CD4-positive, alpha-beta T cell (primary cell): ENCODE measurements at regions of chr6 and their contacts with region 1.

Region 1: GRCh38 chr6:73329201-73329600 is 24.9 kb downstream of the DPPA5 start:
- DNase-seq: no peak
- ATAC-seq: no peak
- H3K4me3 ChIP-seq: no peak overlapping the region
- H3K4me3 Mint-ChIP-seq: no peak overlapping the region
- H3K27ac ChIP-seq: no peak overlapping the region
- H3K27ac Mint-ChIP-seq: no peak overlapping the region
- H3K4me1 ChIP-seq: no peaks in the 10 kb centered on the region
- H3K4me1 Mint-ChIP-seq: no peaks in the 10 kb centered on the region
- H3K27me3 ChIP-seq: no peaks in the 10 kb centered on the region
- H3K27me3 Mint-ChIP-seq: peaks cover 33% of the 10 kb centered on the region
- CTCF ChIP-seq: no peak

Region 2: DNA sequence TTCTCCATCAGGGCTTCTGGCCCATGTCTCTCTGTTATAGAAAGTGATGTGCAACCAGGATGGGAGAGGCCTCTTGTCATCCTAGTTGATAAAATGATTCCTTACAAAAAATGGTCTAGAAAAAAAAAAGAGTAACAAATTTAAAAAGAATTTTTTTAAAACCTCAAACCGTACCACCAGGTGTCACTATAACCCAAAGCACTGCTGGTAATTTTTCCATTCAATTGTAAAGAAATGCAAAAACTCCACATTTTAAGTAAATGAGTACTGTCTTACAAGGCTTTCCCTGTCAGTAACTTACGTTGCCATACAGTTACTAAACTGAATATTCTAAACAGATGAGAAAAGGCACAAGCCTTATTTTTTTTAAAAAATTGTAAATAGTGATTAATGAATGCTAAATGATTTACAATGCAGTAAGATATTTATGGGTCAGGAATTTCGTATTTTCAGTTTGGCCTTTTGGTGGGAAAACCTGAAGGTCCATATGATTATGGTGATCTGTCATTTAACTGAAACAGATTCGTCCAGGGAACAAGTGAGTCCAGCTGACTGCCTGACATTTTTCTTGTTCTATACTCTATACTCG is 1945.2 kb before region 1 on chr6:
- CTCF ChIA-PET with region 1: no interaction called
- POLR2A ChIA-PET with region 1: no interaction called
- intact Hi-C with region 1: loop called in 1 of 2 experiments (anchors 10 kb)
- DNase-seq: peak in 3 of 14 experiments; percentile 8 to 13 (median 12)
- ATAC-seq: no peak
- H3K4me3 ChIP-seq: no peak overlapping the region
- H3K4me3 Mint-ChIP-seq: no peak overlapping the region
- H3K27ac ChIP-seq: no peak overlapping the region
- H3K27ac Mint-ChIP-seq: no peak overlapping the region
- H3K4me1 ChIP-seq: no peaks in the 10 kb centered on the region
- H3K4me1 Mint-ChIP-seq: no peaks in the 10 kb centered on the region
- H3K27me3 ChIP-seq: peaks cover 0 to 5% of the 10 kb centered on the region in 2 experiments
- H3K27me3 Mint-ChIP-seq: peaks cover 5% of the 10 kb centered on the region
- CTCF ChIP-seq: peak; percentile 44

Region 3: GRCh38 chr6:72411872-72412708 is 917.1 kb before region 1 on chr6:
- CTCF ChIA-PET with region 1: interaction called, 8 read pairs
- POLR2A ChIA-PET with region 1: no interaction called
- intact Hi-C with region 1: loop called (anchors 1 to 2 kb)
- DNase-seq: peak; percentile 50 to 87 (median 67)
- ATAC-seq: peak; percentile 99
- H3K4me3 ChIP-seq: no peak overlapping the region
- H3K4me3 Mint-ChIP-seq: no peak overlapping the region
- H3K27ac ChIP-seq: no peak overlapping the region
- H3K27ac Mint-ChIP-seq: no peak overlapping the region
- H3K4me1 ChIP-seq: no peaks in the 10 kb centered on the region
- H3K4me1 Mint-ChIP-seq: no peaks in the 10 kb centered on the region
- H3K27me3 ChIP-seq: no peaks in the 10 kb centered on the region
- H3K27me3 Mint-ChIP-seq: peaks cover 11% of the 10 kb centered on the region
- CTCF ChIP-seq: peak; percentile 100

Region 4: GRCh38 chr6:72622094-72622940 is 706.9 kb before region 1 on chr6:
- CTCF ChIA-PET with region 1: no interaction called
- POLR2A ChIA-PET with region 1: no interaction called
- intact Hi-C with region 1: loop called (anchors 2 to 5 kb)
- DNase-seq: peak in 12 of 14 experiments; percentile 34 to 78 (median 50)
- ATAC-seq: peak; percentile 33
- H3K4me3 ChIP-seq: peak overlapping the region; percentile 77
- H3K4me3 Mint-ChIP-seq: peak overlapping the region; percentile 95
- H3K27ac ChIP-seq: no peak overlapping the region
- H3K27ac Mint-ChIP-seq: peak overlapping the region; percentile 24
- H3K4me1 ChIP-seq: peaks cover 37% of the 10 kb centered on the region
- H3K4me1 Mint-ChIP-seq: peaks cover 45% of the 10 kb centered on the region
- H3K27me3 ChIP-seq: no peaks in the 10 kb centered on the region
- H3K27me3 Mint-ChIP-seq: peaks cover 21% of the 10 kb centered on the region
- CTCF ChIP-seq: peak; percentile 0

Region 5: DNA sequence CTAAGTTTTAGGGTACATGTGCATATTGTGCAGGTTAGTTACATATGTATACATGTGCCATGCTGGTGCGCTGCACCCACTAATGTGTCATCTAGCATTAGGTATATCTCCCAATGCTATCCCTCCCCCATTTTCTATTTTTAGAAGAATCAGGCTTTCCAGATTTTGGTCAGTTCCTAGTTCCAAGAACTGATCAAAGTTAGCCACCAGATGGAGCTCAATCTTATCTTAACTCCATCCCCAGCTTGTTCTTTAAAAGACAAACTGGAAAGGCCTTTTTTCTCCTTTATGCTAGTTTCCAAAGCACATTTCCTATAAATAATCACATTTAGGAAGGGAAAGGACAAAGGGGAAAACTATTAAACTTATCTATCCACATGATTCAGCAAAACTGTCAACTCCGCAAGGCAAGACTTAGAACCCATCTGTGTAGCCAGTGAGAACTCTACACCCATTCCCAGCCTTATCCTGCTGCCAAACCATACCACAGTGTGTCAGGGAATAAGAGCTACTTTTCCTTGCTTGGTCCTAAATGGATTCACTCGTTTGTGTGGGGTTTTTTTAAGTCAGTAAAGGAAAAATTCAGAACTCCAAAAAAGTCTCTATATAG is 43.4 kb before region 1 on chr6:
- CTCF ChIA-PET with region 1: interaction called, 6 read pairs
- POLR2A ChIA-PET with region 1: no interaction called
- intact Hi-C with region 1: loop called (anchors 5 kb)
- DNase-seq: peak in 3 of 14 experiments; percentile 20 to 27 (median 24)
- ATAC-seq: no peak
- H3K4me3 ChIP-seq: no peak overlapping the region
- H3K4me3 Mint-ChIP-seq: no peak overlapping the region
- H3K27ac ChIP-seq: no peak overlapping the region
- H3K27ac Mint-ChIP-seq: no peak overlapping the region
- H3K4me1 ChIP-seq: no peaks in the 10 kb centered on the region
- H3K4me1 Mint-ChIP-seq: no peaks in the 10 kb centered on the region
- H3K27me3 ChIP-seq: no peaks in the 10 kb centered on the region
- H3K27me3 Mint-ChIP-seq: no peaks in the 10 kb centered on the region
- CTCF ChIP-seq: no peak

Region 6: DNA sequence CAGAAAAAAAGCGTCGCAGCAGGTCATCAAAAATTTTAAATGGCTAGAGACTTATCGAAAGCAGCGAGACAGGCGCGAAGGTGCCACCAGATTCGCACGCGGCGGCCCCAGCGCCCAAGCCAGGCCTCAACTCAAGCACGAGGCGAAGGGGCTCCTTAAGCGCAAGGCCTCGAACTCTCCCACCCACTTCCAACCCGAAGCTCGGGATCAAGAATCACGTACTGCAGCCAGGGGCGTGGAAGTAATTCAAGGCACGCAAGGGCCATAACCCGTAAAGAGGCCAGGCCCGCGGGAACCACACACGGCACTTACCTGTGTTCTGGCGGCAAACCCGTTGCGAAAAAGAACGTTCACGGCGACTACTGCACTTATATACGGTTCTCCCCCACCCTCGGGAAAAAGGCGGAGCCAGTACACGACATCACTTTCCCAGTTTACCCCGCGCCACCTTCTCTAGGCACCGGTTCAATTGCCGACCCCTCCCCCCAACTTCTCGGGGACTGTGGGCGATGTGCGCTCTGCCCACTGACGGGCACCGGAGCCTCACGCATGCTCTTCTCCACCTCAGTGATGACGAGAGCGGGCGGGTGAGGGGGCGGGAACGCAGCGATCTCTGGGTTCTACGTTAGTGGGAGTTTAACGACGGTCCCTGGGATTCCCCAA is 191.6 kb after region 1 on chr6 and contains the start of gene EEF1A1:
- CTCF ChIA-PET with region 1: no interaction called
- POLR2A ChIA-PET with region 1: no interaction called
- intact Hi-C with region 1: no loop called
- DNase-seq: peak; percentile 98 to 100 (median 99)
- ATAC-seq: peak; percentile 81
- H3K4me3 ChIP-seq: peak within 1 kb of the TSS; percentile 90
- H3K4me3 Mint-ChIP-seq: peak within 1 kb of the TSS; percentile 94
- H3K27ac ChIP-seq: peak within 1 kb of the TSS; percentile 99
- H3K27ac Mint-ChIP-seq: peak within 1 kb of the TSS; percentile 97
- H3K4me1 ChIP-seq: peaks cover 64% of the 10 kb centered on the region
- H3K4me1 Mint-ChIP-seq: peaks cover 74% of the 10 kb centered on the region
- H3K27me3 ChIP-seq: no peaks in the 10 kb centered on the region
- H3K27me3 Mint-ChIP-seq: no peaks in the 10 kb centered on the region
- CTCF ChIP-seq: no peak
- total RNA-seq, gene EEF1A1: 15,669 to 16,465 TPM